Naive thymus-derived CD4-positive, alpha-beta T cell (primary cell): ENCODE measurements at regions of chr1 and their contacts with region 1.

Region 1: GRCh38 chr1:164534863-164535610 is 23.9 kb upstream of the PBX1 start:
- DNase-seq: no peak
- ATAC-seq: no peak
- H3K4me3 ChIP-seq: no peak overlapping the region
- H3K4me3 Mint-ChIP-seq: no peak overlapping the region
- H3K27ac ChIP-seq: no peak overlapping the region
- H3K27ac Mint-ChIP-seq: no peak overlapping the region
- H3K4me1 ChIP-seq: no peaks in the 10 kb centered on the region
- H3K4me1 Mint-ChIP-seq: no peaks in the 10 kb centered on the region
- H3K27me3 ChIP-seq: no peaks in the 10 kb centered on the region
- H3K27me3 Mint-ChIP-seq: peaks cover 0 to 6% (median 0%) of the 10 kb centered on the region in 5 donors

Region 2: GRCh38 chr1:164131949-164132348 is 403.1 kb before region 1 on chr1:
- CTCF ChIA-PET with region 1: no interaction called
- POLR2A ChIA-PET with region 1: no interaction called
- intact Hi-C with region 1: loop called in 1 of 2 experiments (anchors 5 kb)
- DNase-seq: no peak
- ATAC-seq: no peak
- H3K4me3 ChIP-seq: no peak overlapping the region
- H3K4me3 Mint-ChIP-seq: no peak overlapping the region
- H3K27ac ChIP-seq: no peak overlapping the region
- H3K27ac Mint-ChIP-seq: no peak overlapping the region
- H3K4me1 ChIP-seq: no peaks in the 10 kb centered on the region
- H3K4me1 Mint-ChIP-seq: no peaks in the 10 kb centered on the region
- H3K27me3 ChIP-seq: no peaks in the 10 kb centered on the region
- H3K27me3 Mint-ChIP-seq: no peaks in the 10 kb centered on the region